IMR-90 (cell line): ENCODE measurements at regions of chr22 and their contacts with region 1.

Region 1: GRCh38 chr22:32920032-32920628 is 118.6 kb downstream of the TIMP3 start:
- DNase-seq: peak; percentile 33
- ATAC-seq: peak; percentile 44
- H3K4me3 ChIP-seq: no peak overlapping the region
- H3K27ac ChIP-seq: no peak overlapping the region
- H3K4me1 ChIP-seq: no peaks in the 10 kb centered on the region; the same call in 1 of the 2 replicates
- H3K27me3 ChIP-seq: peaks cover 44% of the 10 kb centered on the region
- CTCF ChIP-seq: no peak
- POLR2A ChIP-seq: no peak
- RAD21 ChIP-seq: no peak

Region 2: DNA sequence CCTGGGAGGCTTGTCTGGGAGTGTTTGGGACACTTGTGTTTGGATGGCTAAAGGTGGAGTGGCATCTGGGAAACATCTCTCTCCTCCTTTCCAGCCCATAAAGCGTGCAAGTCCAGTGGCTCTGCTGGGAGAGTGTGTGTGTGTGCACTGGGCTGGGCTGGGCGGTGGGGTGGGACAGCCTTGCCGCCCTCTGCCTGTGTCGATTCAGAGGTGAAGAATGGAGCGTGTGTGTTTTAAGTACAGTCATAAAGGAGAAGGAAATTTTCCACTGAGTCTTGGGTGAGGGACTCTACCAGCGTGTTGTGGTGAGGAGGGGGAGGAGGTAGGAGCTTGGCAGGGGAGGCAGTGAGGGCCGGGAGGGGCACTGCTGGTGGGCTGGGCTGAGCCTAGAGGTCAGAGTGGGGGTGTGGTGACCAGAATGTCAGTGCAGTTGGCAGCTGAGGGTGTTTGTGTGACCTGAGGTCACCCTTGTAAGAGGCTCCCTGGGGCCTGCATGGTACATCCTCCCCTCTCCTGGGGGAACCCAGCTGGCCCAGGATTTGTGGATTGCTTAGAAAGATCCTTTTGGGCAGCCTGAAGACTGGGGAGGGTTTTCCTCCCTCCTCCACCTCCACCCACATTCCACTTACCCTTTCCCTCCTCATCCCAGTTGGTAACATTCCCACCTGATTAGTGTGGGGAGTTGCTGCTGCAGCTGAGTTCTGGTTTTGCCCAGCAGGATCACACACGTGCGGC is 116.9 kb before region 1 on chr22:
- CTCF ChIA-PET with region 1: no interaction called
- POLR2A ChIA-PET with region 1: interaction called, 14 read pairs
- dilution Hi-C with region 1: no loop called
- in situ Hi-C with region 1: no loop called
- intact Hi-C with region 1: no loop called
- DNase-seq: peak; percentile 70
- ATAC-seq: peak; percentile 27
- H3K4me3 ChIP-seq: peak overlapping the region; percentile 75
- H3K27ac ChIP-seq: peak overlapping the region; percentile 56
- H3K4me1 ChIP-seq: peaks cover 16% of the 10 kb centered on the region
- H3K27me3 ChIP-seq: no peaks in the 10 kb centered on the region
- CTCF ChIP-seq: no peak
- POLR2A ChIP-seq: peak; percentile 48; the same call in 1 of the 2 replicates
- RAD21 ChIP-seq: peak; percentile 12; the same call in 1 of the 2 replicates